ENCODE measurements at regions of chr12 and their contacts with region 1.

Region 1: DNA sequence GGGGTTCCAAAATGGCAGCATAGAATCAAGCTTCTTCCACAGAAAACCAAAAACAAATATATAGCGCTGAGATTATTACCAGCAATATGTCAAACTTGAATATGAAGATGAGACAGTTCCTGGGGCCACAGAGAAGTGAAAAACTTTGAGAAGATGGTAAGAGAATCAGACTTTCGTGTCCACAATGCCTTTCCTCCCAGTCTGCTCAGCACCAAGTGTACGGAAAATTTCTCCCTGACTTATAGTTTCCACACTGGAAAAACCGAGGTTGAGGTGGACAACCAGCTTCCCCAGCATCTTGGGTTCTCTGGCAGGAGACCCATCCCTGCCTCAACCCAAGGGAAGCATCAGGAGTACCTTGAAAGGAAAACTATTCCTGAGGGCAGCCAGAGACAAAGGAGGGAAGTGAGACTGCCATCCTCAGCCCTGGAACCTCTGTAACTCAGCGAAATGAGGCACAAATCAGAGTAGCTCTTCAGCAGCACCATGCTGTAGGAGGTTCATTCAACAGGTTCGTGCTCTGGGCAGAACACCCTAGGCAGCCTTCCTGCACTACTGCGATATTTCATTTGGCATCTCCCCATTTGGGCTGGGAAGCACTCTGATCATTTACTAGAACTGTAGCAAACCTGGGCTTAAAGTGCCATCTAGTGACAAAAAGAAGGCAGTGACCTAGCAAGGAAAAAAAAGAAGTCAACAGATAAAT is 52.4 kb upstream of the CAPRIN2 start:
- DNase-seq: no peak
- H3K4me3 ChIP-seq: no peak overlapping the region
- H3K27ac ChIP-seq: no peak overlapping the region
- H3K4me1 ChIP-seq: peaks cover 0 to 5% (median 1%) of the 10 kb centered on the region in 6 donors
- H3K27me3 ChIP-seq: no peaks in the 10 kb centered on the region
- CTCF ChIP-seq: peak; percentile 46 to 93 (median 75)
- POLR2A ChIP-seq: no peak

Region 2: GRCh38 chr12:29073628-29074239 is 1733.4 kb before region 1 on chr12:
- intact Hi-C with region 1: loop called (anchors 10 kb)
- DNase-seq: no peak
- H3K4me3 ChIP-seq: no peak overlapping the region
- H3K27ac ChIP-seq: no peak overlapping the region
- H3K4me1 ChIP-seq: no peaks in the 10 kb centered on the region
- H3K27me3 ChIP-seq: no peaks in the 10 kb centered on the region
- CTCF ChIP-seq: peak in 9 of 11 experiments; percentile 27 to 70 (median 64)
- POLR2A ChIP-seq: no peak

Region 3: GRCh38 chr12:29552324-29552927 is 1254.7 kb before region 1 on chr12:
- intact Hi-C with region 1: loop called (anchors 10 kb)
- DNase-seq: peak; percentile 87
- H3K4me3 ChIP-seq: no peak overlapping the region
- H3K27ac ChIP-seq: peak overlapping the region in 7 of 8 donors; percentile 48 to 74 (median 65)
- H3K4me1 ChIP-seq: peaks cover 0 to 34% (median 14%) of the 10 kb centered on the region in 6 donors
- H3K27me3 ChIP-seq: no peaks in the 10 kb centered on the region
- CTCF ChIP-seq: peak; percentile 60 to 88 (median 80)
- POLR2A ChIP-seq: no peak

Region 4: DNA sequence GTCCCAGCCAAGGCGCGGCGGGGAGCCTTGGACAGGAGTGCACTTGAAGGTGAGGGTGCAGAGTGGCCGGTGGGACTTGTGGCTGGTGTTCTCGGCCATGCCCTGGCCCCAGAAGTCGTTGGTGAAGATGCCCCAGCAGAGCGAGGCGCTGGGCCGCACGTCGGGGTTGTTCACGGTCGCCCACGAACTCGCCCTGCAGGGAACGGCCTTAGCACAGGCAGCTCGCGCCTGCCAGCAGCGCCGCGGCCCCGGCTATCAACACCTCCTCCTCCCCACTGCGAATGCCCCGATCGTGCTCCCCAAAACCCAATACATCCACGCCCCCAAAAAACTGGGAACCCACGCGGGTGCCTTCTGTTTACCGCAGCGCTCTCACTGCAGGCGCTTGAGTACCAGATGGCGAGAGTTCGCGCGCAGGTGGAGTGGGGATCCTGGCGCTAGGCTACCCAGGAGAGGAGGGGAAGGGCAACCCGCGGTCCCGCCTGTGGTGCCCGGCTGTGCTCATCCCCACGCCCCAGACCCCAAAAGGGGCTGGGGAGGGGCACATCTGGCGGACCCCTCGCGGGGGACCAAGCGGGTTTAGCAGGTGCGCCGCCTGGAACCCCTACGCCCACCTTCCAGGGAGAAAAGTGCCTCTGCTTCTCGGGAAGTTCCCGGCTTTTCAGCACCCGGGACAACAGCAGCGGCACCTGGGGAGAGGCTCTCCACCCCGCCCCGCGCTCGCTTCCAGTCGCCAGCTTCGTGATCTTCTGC is 637.1 kb before region 1 on chr12:
- intact Hi-C with region 1: no loop called
- DNase-seq: no peak
- H3K4me3 ChIP-seq: peak overlapping the region in 1 of 8 donors; percentile 9
- H3K27ac ChIP-seq: no peak overlapping the region
- H3K4me1 ChIP-seq: no peaks in the 10 kb centered on the region
- H3K27me3 ChIP-seq: peaks cover 0 to 31% (median 8%) of the 10 kb centered on the region in 7 donors
- CTCF ChIP-seq: no peak
- POLR2A ChIP-seq: no peak

Region 5: GRCh38 chr12:30926243-30927221 is 119.4 kb after region 1 on chr12 and contains the start of gene TSPAN11:
- intact Hi-C with region 1: no loop called
- DNase-seq: no peak
- H3K4me3 ChIP-seq: peak within 1 kb of the TSS in 7 of 8 donors; percentile 5 to 57 (median 16)
- H3K27ac ChIP-seq: peak within 1 kb of the TSS in 2 of 8 donors; percentile 37 to 66
- H3K4me1 ChIP-seq: peaks cover 0 to 49% (median 29%) of the 10 kb centered on the region in 6 donors
- H3K27me3 ChIP-seq: peaks cover 0 to 66% (median 19%) of the 10 kb centered on the region in 7 donors
- CTCF ChIP-seq: no peak
- POLR2A ChIP-seq: no peak
- total RNA-seq, gene TSPAN11: 0.26 to 4.1 (median 2.0) TPM